Activated CD4-positive, alpha-beta memory T cell treated with anti-CD3 and anti-CD28 coated beads for 36 hours (primary cell): ENCODE measurements at regions of chr1 and their contacts with region 1.

Region 1: GRCh38 chr1:198520524-198521254 is 19.8 kb downstream of the ATP6V1G3 start:
- DNase-seq: no peak
- H3K4me3 Mint-ChIP-seq: peak overlapping the region; percentile 67
- H3K27ac Mint-ChIP-seq: peak overlapping the region; percentile 79
- H3K4me1 Mint-ChIP-seq: peaks cover 78% of the 10 kb centered on the region
- H3K27me3 Mint-ChIP-seq: no peaks in the 10 kb centered on the region

Region 2: GRCh38 chr1:197775282-197776262 is 745.1 kb before region 1 on chr1 and contains the start of gene DENND1B:
- CTCF ChIA-PET with region 1: no interaction called
- POLR2A ChIA-PET with region 1: interaction called, 3 read pairs
- intact Hi-C with region 1: loop called (anchors 1 kb)
- DNase-seq: peak; percentile 87
- H3K4me3 Mint-ChIP-seq: peak within 1 kb of the TSS; percentile 92
- H3K27ac Mint-ChIP-seq: peak within 1 kb of the TSS; percentile 100
- H3K4me1 Mint-ChIP-seq: peaks cover 69% of the 10 kb centered on the region
- H3K27me3 Mint-ChIP-seq: no peaks in the 10 kb centered on the region
- total RNA-seq, gene DENND1B: 12.5 to 15.6 TPM

Region 3: GRCh38 chr1:198497346-198498102 is 23.2 kb before region 1 on chr1:
- CTCF ChIA-PET with region 1: no interaction called
- POLR2A ChIA-PET with region 1: no interaction called
- intact Hi-C with region 1: no loop called
- DNase-seq: no peak
- H3K4me3 Mint-ChIP-seq: no peak overlapping the region
- H3K27ac Mint-ChIP-seq: no peak overlapping the region
- H3K4me1 Mint-ChIP-seq: peaks cover 13% of the 10 kb centered on the region
- H3K27me3 Mint-ChIP-seq: no peaks in the 10 kb centered on the region

Region 4: DNA sequence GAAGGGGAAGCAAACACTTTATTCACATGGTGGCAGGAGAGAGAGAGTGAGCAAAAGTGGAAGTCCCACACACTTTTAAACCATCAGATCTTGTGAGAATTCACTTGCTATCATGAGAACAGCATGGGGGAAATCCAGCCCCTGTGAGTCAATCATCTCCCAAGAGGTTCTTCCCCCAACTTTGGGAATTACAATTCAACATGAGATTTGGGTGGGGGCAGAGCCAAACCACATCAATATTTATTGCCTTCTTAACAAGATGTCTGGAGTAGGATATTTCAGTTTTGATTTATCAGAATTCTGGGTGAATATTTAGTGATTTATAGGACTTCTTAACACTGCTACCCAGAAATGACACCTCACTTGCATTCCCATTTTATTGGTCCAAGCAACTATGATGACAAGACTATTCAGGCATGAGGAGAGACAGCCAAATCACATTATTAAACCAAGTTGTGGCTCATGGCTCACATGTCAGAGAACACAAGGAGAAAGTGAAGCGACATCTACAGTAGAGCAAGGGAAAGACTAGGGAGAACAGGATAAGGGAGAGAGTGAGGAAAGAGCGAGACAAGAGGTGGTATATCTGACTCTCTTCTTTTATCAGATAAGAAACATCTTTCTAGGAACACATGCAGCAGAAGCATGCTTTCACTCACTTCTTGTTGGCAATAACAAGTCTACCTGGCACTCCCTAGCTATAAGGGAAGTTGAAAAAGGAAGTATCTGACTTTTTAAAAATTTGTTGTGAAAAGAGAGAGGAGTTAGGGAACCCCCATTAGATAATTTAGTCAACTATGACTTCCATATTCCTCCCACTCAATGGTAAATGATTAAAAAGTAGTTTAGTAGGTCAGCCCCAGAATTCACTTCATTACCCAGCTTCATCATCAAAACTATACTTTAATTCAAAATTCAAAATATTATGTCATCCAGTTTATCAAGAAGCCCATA is 81.5 kb after region 1 on chr1:
- CTCF ChIA-PET with region 1: no interaction called
- POLR2A ChIA-PET with region 1: interaction called, 3 read pairs
- intact Hi-C with region 1: loop called (anchors 1 kb)
- DNase-seq: peak; percentile 72
- H3K4me3 Mint-ChIP-seq: peak overlapping the region; percentile 33
- H3K27ac Mint-ChIP-seq: peak overlapping the region; percentile 77
- H3K4me1 Mint-ChIP-seq: peaks cover 79% of the 10 kb centered on the region
- H3K27me3 Mint-ChIP-seq: no peaks in the 10 kb centered on the region

Region 5: DNA sequence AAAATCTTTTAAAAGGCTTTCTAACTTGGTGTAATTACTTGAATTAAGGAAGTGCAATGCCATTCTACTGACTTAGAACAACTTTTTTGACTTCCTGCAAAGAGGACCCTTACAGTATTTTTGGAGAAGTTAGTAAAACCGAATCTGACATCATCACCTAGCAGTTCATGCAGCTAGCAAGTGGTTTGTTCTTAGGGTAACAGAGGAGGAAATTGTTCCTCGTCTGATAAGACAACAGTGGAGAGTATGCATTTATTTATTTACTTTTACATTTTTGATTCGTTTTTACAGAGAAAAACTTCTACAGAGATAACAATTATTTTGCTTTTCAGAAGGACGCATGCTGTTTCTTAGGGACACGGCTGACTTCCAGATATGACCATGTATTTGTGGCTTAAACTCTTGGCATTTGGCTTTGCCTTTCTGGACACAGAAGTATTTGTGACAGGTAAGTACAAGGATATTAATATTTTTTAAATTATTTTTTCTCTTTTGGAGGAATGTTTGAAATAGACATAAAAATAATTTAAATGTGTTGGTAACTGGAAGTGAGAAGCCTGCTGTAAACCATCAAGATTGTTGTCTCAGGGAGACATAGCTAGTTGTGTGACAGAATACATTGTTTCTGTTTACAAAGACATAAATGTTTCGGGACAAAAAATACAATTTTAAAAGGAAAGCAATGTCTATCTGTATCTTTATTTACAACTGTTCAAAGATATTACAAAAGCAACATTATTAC is 118.4 kb after region 1 on chr1 and contains the start of gene PTPRC:
- CTCF ChIA-PET with region 1: interaction called, 4 read pairs
- POLR2A ChIA-PET with region 1: interaction called, 9 read pairs
- intact Hi-C with region 1: loop called (anchors 1 kb)
- DNase-seq: no peak
- H3K4me3 Mint-ChIP-seq: peak within 1 kb of the TSS; percentile 89
- H3K27ac Mint-ChIP-seq: peak within 1 kb of the TSS; percentile 98
- H3K4me1 Mint-ChIP-seq: peaks cover 47% of the 10 kb centered on the region
- H3K27me3 Mint-ChIP-seq: no peaks in the 10 kb centered on the region
- total RNA-seq, gene PTPRC: 495 to 503 TPM

Region 6: DNA sequence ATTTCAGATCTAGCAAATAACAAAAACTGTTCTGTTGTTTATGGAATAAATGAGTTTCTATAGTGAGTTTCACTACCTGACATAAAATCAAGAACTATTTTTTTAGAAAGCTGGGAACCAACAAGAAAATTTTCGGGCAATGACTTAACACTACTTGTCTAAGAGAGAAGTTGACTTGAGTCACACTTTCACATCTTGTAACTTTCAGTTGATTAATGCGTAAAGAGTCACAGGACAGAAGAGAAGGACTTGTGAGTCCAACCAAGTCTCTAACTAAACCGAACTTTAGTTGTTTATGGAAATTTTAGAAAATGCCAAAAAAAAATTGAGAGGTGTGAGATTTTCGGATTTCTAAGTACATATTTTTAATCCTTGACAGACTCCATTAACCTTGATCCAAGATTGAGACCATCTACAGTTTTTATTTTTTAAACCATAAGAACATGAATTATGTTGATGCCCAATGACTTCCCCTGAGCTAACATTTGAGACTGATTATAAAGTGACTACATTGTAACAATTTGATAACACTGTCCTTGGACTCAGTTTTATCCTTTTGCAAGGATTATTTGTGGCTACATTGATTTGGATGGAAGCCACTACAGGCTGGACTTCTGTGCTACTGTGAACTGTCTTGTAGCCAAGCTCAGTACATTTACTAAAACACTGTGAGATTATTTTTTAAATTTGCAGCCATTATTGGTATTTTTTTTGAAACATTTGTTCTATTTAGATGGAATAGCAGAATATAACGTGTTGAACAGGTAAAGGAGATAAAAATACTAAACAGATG is 402.1 kb after region 1 on chr1:
- CTCF ChIA-PET with region 1: no interaction called
- POLR2A ChIA-PET with region 1: no interaction called
- intact Hi-C with region 1: loop called (anchors 5 kb)
- DNase-seq: no peak
- H3K4me3 Mint-ChIP-seq: no peak overlapping the region
- H3K27ac Mint-ChIP-seq: peak overlapping the region; percentile 66
- H3K4me1 Mint-ChIP-seq: peaks cover 58% of the 10 kb centered on the region
- H3K27me3 Mint-ChIP-seq: no peaks in the 10 kb centered on the region

Region 7: GRCh38 chr1:199226163-199226562 is 705.5 kb after region 1 on chr1:
- CTCF ChIA-PET with region 1: no interaction called
- POLR2A ChIA-PET with region 1: no interaction called
- intact Hi-C with region 1: loop called (anchors 5 kb)
- DNase-seq: peak; percentile 47
- H3K4me3 Mint-ChIP-seq: peak overlapping the region; percentile 35
- H3K27ac Mint-ChIP-seq: peak overlapping the region; percentile 55
- H3K4me1 Mint-ChIP-seq: peaks cover 20% of the 10 kb centered on the region
- H3K27me3 Mint-ChIP-seq: no peaks in the 10 kb centered on the region